Aorta (tissue), 5 donors: ENCODE measurements at regions of chr2 and their contacts with region 1.

Region 1: DNA sequence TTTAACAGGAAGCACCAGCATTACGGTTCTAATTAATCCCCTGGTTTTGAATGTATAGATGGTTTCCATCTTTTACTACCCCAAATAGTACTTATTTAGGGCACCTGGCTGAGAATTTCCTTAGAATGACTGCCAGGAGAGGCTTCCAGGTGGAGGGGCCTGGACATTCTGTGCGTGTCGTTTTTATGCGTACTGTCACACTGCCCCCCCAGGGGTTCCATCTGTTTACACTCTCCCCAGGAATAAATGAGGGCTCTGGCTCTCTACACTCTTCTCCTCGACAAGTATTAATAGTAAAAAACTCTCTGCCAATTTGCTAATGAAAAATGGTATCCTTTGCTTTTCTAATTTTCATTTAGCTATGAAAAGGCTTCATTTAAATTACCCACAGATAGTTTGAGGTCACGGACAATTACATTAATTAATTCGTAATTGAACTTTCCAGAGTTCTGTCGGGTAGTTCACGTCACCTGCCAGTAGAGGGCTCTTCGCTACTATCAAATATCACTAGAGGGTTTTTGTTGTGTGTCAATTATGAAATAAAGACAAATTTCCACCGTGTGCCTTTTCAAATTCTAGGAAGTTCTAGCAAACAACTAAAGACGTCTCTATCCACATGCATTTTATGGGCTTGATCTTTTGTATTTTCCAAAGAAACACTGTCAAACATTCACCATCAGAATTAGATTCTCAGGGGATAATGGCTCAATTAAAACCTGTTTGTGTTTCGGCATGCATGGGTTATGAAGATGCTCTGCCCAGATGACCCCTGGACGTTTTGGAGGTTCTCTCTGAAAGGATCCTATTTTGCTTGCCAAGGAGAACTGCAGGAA is 88.8 kb upstream of the ASB18 start:
- DNase-seq: no peak
- ATAC-seq: no peak
- H3K4me3 ChIP-seq: no peak overlapping the region
- H3K27ac ChIP-seq: no peak overlapping the region
- H3K4me1 ChIP-seq: no peaks in the 10 kb centered on the region
- H3K27me3 ChIP-seq: no peaks in the 10 kb centered on the region

Region 2: DNA sequence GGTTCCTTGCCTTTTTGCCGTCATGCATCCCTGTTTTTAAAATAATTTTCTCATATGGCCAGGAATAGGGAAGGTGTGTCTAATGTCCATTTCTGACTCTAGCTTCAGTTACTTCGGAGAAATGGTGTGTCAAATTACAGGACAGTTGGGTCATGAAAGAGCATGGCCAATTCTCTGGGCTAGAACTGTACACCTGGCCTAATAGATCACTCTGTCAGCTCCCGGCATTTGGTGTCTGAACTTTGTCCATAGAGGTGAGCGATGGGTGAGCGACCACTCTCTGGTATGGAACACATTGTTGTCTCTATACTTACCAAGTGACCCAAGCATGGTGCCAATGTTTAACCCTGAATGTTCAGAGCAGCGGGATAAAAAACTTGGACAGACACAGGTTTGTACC is 50.4 kb before region 1 on chr2:
- intact Hi-C with region 1: no loop called
- DNase-seq: no peak
- ATAC-seq: no peak
- H3K4me3 ChIP-seq: no peak overlapping the region
- H3K27ac ChIP-seq: no peak overlapping the region
- H3K4me1 ChIP-seq: no peaks in the 10 kb centered on the region
- H3K27me3 ChIP-seq: no peaks in the 10 kb centered on the region

Region 3: DNA sequence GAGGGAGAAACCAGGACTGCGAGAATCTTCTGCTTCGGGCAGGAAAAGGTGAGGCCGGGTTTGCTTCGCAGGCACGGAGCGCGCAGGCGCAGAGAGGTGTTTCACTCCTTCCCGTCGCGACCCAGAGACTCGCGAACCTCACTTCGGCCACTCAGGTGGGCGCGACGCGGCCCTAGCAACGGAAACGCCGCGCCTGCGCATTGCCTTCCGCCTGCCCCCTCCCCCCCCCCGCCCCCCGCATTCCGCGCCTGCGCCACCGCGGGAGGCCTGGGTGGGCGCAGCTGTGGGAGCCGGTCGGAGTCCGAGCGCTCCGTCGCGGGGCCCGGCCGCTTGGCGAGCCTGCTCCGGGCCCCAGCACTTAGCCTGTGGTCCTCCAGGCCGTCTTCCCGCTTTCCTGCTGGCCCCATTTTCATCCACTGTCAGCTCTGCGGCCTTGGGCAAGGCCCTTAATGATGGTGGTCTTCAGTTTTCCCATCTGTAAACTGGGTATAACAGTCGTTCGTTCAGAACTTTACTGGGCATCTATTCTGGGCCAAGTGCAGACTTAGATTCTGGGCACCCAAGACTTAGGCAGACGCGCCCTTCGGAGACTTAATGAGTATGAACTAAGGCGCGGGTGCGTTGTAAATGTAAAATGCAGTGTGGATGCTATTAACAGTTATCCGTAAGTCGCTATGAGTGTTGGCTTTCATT is 154.6 kb after region 1 on chr2:
- intact Hi-C with region 1: loop called in 1 of 2 experiments (anchors 10 kb)
- DNase-seq: peak; percentile 73 to 88
- ATAC-seq: peak; percentile 67
- H3K4me3 ChIP-seq: peak overlapping the region; percentile 35 to 43
- H3K27ac ChIP-seq: no peak overlapping the region
- H3K4me1 ChIP-seq: no peaks in the 10 kb centered on the region
- H3K27me3 ChIP-seq: no peaks in the 10 kb centered on the region

Region 4: GRCh38 chr2:236607451-236608187 is 254.6 kb after region 1 on chr2:
- intact Hi-C with region 1: no loop called
- DNase-seq: no peak
- ATAC-seq: no peak
- H3K4me3 ChIP-seq: no peak overlapping the region
- H3K27ac ChIP-seq: no peak overlapping the region
- H3K4me1 ChIP-seq: no peaks in the 10 kb centered on the region
- H3K27me3 ChIP-seq: no peaks in the 10 kb centered on the region

Region 5: GRCh38 chr2:237026981-237027711 is 674.2 kb after region 1 on chr2:
- intact Hi-C with region 1: loop called (anchors 2 to 5 kb)
- DNase-seq: peak; percentile 80 to 88
- ATAC-seq: peak; percentile 86
- H3K4me3 ChIP-seq: no peak overlapping the region
- H3K27ac ChIP-seq: no peak overlapping the region
- H3K4me1 ChIP-seq: no peaks in the 10 kb centered on the region
- H3K27me3 ChIP-seq: no peaks in the 10 kb centered on the region

Region 6: GRCh38 chr2:237072067-237072931 is 719.3 kb after region 1 on chr2:
- intact Hi-C with region 1: loop called in 1 of 2 experiments (anchors 2 kb)
- DNase-seq: peak; percentile 82 to 91
- ATAC-seq: peak; percentile 85
- H3K4me3 ChIP-seq: no peak overlapping the region
- H3K27ac ChIP-seq: no peak overlapping the region
- H3K4me1 ChIP-seq: peaks cover 0 to 5% of the 10 kb centered on the region in 2 donors
- H3K27me3 ChIP-seq: no peaks in the 10 kb centered on the region